Heart right ventricle (tissue), 16 donors: ENCODE measurements at regions of chr10 and their contacts with region 1.

Region 1: DNA sequence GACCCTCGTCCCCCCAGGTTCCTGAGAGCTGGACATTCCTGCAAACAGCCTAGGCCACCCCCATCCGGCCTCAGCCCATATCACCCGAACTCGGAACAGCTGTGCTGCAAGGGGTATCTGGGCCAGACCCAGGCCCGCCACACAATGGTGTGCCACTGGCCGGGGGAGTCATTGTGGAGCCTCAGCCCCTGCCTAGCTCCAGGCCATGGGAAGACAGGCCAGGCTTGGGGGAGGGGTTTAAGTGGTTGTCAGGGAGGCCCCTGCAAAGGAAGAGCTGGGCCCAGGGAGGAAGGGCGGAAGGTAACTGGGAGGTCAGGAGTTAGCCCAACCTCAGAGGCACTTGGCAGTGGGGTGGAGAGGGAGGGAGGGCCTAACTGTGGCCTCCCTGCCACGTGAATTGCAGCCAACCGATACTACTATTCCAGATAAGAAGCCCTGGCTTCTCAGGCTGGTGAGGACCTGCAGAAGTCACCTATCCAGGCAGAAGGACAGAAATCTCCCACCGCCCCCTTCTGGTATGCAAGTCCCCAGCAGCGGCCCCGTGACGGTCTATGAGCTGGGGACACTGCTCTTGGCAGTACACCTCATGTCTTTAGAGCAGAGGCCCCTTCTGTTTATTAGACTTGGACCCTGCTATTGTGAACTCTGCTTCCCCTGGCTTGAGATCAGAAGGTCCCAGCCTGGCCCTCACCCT is 26.8 kb downstream of the VSIR start:
- DNase-seq: peak; percentile 68 to 79
- ATAC-seq: peak; percentile 50 to 74 (median 61)
- H3K4me3 ChIP-seq: no peak overlapping the region
- H3K27ac ChIP-seq: peak overlapping the region; percentile 64 to 95 (median 88)
- H3K4me1 ChIP-seq: peaks cover 43 to 99% (median 57%) of the 10 kb centered on the region in 9 donors
- H3K27me3 ChIP-seq: no peaks in the 10 kb centered on the region
- CTCF ChIP-seq: peak in 6 of 9 donors; percentile 6 to 52 (median 32)

Region 2: GRCh38 chr10:71766702-71767419 is 20.4 kb after region 1 on chr10:
- intact Hi-C with region 1: loop called in 1 of 10 experiments (anchors 1 kb)
- DNase-seq: peak; percentile 76 to 82
- ATAC-seq: peak; percentile 38 to 73 (median 67)
- H3K4me3 ChIP-seq: peak overlapping the region in 3 of 10 donors; percentile 5 to 95 (median 9)
- H3K27ac ChIP-seq: peak overlapping the region; percentile 42 to 99 (median 98)
- H3K4me1 ChIP-seq: peaks cover 47 to 100% (median 100%) of the 10 kb centered on the region in 9 donors
- H3K27me3 ChIP-seq: no peaks in the 10 kb centered on the region
- CTCF ChIP-seq: no peak

Region 3: DNA sequence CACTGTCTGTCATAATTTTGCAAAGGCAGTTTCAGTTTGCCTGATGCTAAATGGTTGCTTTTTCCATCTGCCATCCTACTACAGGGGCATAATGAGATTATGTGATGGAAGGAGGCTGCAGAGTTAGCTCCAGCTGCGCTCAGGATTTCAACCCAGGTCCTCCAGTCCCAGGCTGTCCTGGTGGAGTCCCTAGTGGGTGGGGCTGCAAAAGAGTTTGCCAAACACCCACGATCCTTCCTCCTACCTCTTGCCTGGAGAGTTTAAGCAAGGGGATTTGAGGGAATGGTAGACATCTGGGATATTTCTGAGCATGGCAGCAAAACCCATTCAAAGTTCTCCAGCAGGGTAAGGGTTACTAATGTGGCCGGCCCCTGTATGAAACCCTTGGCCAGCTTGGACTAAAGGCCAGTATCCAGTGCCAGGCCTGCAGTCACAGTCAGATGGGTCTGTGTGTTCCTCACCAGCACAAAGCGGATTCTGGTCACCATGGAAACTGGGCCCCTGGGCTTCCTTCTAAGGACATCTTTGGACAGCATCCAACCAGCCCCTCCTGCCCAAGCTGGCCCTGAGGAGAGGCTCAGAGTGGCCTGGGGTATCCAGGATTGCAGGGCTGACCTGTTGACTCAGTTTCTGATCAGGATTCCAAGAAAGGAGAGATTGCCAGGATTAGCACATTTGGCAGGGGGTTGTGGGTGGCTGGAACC is 175.0 kb after region 1 on chr10:
- intact Hi-C with region 1: no loop called
- DNase-seq: peak; percentile 53 to 60
- ATAC-seq: peak; percentile 67 to 86 (median 79)
- H3K4me3 ChIP-seq: no peak overlapping the region
- H3K27ac ChIP-seq: peak overlapping the region in 2 of 10 donors; percentile 0 to 22
- H3K4me1 ChIP-seq: peaks cover 5 to 31% (median 15%) of the 10 kb centered on the region in 9 donors
- H3K27me3 ChIP-seq: no peaks in the 10 kb centered on the region
- CTCF ChIP-seq: no peak